ENCODE measurements at regions of chr11 and their contacts with region 1.

Region 1: GRCh38 chr11:64778508-64779346 is at the start of gene SF1:
- H3K4me3 Mint-ChIP-seq: peak within 1 kb of the TSS; percentile 84
- H3K27ac Mint-ChIP-seq: peak within 1 kb of the TSS; percentile 95
- H3K4me1 Mint-ChIP-seq: peaks cover 34% of the 10 kb centered on the region
- H3K27me3 Mint-ChIP-seq: no peaks in the 10 kb centered on the region

Region 2: DNA sequence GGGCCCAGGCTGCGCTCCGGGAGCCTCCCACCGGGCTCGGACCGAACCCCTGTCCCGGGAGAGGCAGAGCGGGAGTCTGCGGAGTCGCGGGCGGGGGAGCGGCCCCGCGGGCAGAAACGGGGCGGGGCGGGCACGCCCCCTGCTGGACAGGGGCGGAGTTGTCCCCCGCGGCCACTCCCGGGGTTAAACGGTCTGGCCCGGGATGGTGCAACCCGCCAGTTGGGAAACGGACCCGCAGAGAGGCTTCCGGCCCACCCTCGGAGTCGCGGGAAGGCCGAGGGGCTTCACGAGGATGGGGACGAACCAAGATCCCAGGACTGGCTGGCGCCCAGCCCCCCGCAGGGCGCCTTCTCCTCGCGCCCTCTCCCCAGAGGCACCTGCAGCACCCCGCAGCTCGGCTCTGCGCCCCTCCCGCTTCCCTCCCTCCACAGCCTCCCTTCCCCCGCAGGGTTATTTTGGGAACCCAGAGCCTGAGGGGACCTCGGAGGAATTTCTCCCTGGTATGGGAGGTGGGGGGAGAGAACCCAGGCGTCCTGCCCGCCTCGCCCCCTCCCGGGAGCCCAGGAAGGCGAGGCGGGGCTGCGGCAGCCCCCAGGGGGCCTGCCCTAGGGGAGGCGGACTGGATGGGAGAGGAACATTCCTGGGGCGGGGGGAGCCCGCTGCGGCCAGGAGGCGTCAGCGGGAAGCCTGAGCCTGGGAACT is 35.7 kb before region 1 on chr11:
- intact Hi-C with region 1: loop called (anchors 5 kb)
- H3K4me3 Mint-ChIP-seq: peak overlapping the region; percentile 72
- H3K27ac Mint-ChIP-seq: no peak overlapping the region
- H3K4me1 Mint-ChIP-seq: peaks cover 40% of the 10 kb centered on the region
- H3K27me3 Mint-ChIP-seq: peaks cover 10% of the 10 kb centered on the region

Region 3: DNA sequence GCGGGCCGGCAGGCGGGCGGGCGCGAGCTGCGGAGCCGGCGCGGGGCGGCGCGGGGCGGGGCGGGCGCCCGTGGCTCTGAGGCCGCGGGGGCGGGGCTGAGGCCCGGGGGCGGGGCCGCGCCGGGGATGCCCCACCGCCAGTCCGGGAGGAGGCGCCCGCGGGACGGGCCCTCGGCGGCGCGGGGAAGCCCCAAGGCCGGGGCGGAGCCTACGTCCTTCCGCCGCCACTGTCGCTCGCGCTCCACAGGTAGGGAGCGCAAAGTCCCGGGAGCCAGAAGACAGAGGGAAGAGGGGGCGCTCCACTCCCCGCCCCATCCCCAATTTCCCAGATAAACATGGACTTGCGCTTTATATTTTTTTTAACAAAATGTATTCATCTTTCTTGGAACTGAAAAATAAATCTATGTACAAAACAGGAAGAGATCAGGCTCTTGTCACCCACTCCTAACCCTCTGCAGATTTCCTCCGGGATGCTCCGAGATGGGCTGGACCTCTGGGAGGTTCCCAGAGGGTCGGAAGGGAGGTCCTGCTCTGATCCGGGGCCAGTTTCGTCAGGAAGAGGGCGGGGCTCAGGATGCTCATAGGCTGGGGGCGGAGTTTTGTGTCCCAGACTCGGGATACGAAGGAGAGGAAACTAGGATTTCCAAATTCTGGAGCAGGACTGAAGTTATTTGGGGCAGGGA is 24.6 kb after region 1 on chr11 and contains the start of gene MAP4K2:
- intact Hi-C with region 1: loop called (anchors 1 kb)
- H3K4me3 Mint-ChIP-seq: peak within 1 kb of the TSS; percentile 77
- H3K27ac Mint-ChIP-seq: peak within 1 kb of the TSS; percentile 77
- H3K4me1 Mint-ChIP-seq: peaks cover 41% of the 10 kb centered on the region
- H3K27me3 Mint-ChIP-seq: no peaks in the 10 kb centered on the region

Region 4: GRCh38 chr11:64810271-64810890 is 31.7 kb after region 1 on chr11 and contains the start of gene MEN1:
- intact Hi-C with region 1: loop called (anchors 2 kb)
- H3K4me3 Mint-ChIP-seq: peak within 1 kb of the TSS; percentile 99
- H3K27ac Mint-ChIP-seq: peak within 1 kb of the TSS; percentile 83
- H3K4me1 Mint-ChIP-seq: peaks cover 32% of the 10 kb centered on the region
- H3K27me3 Mint-ChIP-seq: peaks cover 1% of the 10 kb centered on the region

Region 5: DNA sequence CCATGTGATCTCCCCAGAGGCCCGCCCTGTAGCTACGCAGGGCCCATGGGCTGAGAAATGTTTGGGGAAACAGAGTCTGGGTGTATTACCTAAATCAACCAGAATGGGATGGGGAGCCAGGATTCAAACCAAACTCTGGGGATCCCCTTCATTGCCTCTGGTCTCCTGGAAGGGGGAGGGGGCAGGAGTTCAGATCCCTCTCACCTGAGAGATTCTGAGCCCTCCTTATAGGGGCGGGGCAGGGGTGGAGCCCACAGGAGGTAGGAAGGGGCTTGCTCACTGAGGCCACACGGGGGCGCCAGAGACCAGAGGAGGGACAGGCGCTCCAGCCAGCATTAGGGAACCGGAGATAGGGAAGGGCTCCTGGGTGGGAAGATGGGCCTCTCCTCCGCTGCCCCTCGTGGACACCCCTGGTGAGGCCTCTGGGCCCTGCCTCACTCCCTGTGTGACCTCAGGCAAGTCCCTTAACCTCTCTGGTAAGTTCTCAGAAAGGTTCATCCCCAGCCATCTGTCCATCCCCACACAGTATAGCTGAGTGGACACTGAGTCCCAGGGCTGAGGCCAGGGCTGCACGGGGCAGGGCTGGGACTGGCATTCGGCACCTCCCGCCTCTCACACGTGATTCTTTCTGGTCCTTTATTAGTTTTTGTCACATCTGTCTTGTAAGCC is 68.4 kb after region 1 on chr11:
- intact Hi-C with region 1: no loop called
- H3K4me3 Mint-ChIP-seq: no peak overlapping the region
- H3K27ac Mint-ChIP-seq: no peak overlapping the region
- H3K4me1 Mint-ChIP-seq: peaks cover 52% of the 10 kb centered on the region
- H3K27me3 Mint-ChIP-seq: peaks cover 30% of the 10 kb centered on the region

Region 6: GRCh38 chr11:64905516-64906313 is 127.0 kb after region 1 on chr11:
- intact Hi-C with region 1: no loop called
- H3K4me3 Mint-ChIP-seq: no peak overlapping the region
- H3K27ac Mint-ChIP-seq: no peak overlapping the region
- H3K4me1 Mint-ChIP-seq: no peaks in the 10 kb centered on the region
- H3K27me3 Mint-ChIP-seq: no peaks in the 10 kb centered on the region